ENCODE measurements at regions of chr12 and their contacts with region 1.

Region 1: GRCh38 chr12:546921-547845 is 87.4 kb downstream of the B4GALNT3 start:
- DNase-seq: no peak
- H3K4me3 ChIP-seq: no peak overlapping the region
- H3K27ac ChIP-seq: no peak overlapping the region
- H3K4me1 ChIP-seq: peaks cover 0 to 7% (median 6%) of the 10 kb centered on the region in 4 donors
- H3K27me3 ChIP-seq: peaks cover 5 to 44% (median 11%) of the 10 kb centered on the region in 3 donors
- CTCF ChIP-seq: peak; percentile 83 to 100 (median 98)
- EP300 ChIP-seq: no peak
- POLR2A ChIP-seq: no peak

Region 2: GRCh38 chr12:176321-177181 is 370.6 kb before region 1 on chr12:
- intact Hi-C with region 1: no loop called
- DNase-seq: no peak
- H3K4me3 ChIP-seq: no peak overlapping the region
- H3K27ac ChIP-seq: peak overlapping the region in 1 of 4 donors; percentile 14
- H3K4me1 ChIP-seq: peaks cover 0 to 12% (median 4%) of the 10 kb centered on the region in 4 donors
- H3K27me3 ChIP-seq: peaks cover 0 to 17% (median 0%) of the 10 kb centered on the region in 3 donors
- CTCF ChIP-seq: no peak
- EP300 ChIP-seq: no peak
- POLR2A ChIP-seq: no peak

Region 3: DNA sequence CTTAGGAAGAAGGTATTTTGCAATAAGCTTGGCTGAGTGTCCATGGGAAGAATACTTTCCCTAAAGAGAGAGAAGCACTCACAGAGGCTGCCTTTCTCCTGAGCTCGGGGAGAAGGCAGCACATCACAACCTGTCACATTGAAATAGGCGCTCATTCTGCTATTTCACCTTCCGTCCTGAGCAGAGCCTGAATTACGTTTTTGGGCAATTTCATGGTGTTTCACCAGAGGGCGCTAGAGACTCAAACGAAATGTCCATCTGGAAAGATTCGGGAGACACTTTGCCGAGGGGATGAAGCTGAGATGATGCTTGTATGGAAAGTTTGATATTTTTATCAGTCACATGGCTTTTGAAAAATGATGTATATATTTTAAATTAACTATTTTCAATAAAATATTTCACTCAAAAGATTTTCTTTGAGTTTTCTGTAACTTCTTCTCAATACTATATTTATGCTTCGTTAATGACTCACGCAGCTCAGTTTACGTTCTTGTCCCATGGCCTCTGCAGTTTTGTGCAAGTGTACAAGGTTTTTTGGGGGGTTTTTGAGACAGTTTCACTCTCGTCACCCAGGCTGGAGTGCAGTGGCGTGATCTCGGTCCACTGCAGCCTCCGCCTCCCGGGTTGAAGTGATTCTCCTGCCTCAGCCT is 104.8 kb before region 1 on chr12:
- intact Hi-C with region 1: loop called (anchors 1 kb)
- DNase-seq: peak; percentile 65
- H3K4me3 ChIP-seq: no peak overlapping the region
- H3K27ac ChIP-seq: no peak overlapping the region
- H3K4me1 ChIP-seq: no peaks in the 10 kb centered on the region
- H3K27me3 ChIP-seq: peaks cover 0 to 6% (median 0%) of the 10 kb centered on the region in 3 donors
- CTCF ChIP-seq: peak; percentile 23 to 78 (median 66)
- EP300 ChIP-seq: no peak
- POLR2A ChIP-seq: no peak